Activated CD8-positive, alpha-beta memory T cell treated with anti-CD3 and anti-CD28 coated beads, Interleukin-2, amount 10 ng/mL, durations not matched to agents 7 days and 5 days (primary cell): ENCODE measurements at regions of chr1 and their contacts with region 1.

Region 1: DNA sequence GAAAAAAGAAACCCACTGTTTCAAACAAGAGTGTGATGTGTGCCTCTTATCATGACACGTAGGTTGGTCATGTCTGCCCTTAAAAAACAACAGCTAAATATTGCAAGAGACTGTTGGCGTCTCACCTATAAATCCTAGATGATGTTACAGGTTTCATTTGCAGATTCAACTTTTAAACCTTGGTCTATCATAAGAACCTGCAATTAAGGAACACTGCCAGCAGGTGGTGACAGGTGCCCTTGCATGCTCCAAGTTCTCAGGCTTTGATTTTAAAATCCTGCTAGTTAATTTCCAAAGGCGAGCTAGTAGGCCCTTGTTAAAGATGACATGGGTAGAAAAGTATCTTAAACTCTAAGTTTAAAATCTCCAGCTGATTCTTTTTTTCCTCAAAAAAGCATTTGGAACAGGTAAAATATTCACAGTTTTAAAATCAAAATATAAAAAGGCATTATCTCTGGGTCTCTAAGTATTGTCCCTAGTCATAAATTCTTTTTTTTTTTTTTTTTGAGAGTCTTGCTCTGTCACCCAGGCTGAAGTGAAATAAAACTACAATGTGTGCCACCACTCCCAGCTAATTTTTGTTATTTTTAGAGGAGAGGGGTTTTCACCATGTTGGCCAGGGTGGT is 39.1 kb downstream of the CLSTN1 start:
- DNase-seq: peak; percentile 81
- ATAC-seq: peak; percentile 27
- H3K4me3 Mint-ChIP-seq: no peak overlapping the region
- H3K27ac Mint-ChIP-seq: peak overlapping the region; percentile 54
- H3K4me1 Mint-ChIP-seq: peaks cover 47% of the 10 kb centered on the region
- H3K27me3 Mint-ChIP-seq: no peaks in the 10 kb centered on the region

Region 2: GRCh38 chr1:9798236-9799130 is 13.9 kb after region 1 on chr1:
- CTCF ChIA-PET with region 1: interaction called, 48 read pairs
- DNase-seq: no peak
- ATAC-seq: no peak
- H3K4me3 Mint-ChIP-seq: no peak overlapping the region
- H3K27ac Mint-ChIP-seq: peak overlapping the region; percentile 97
- H3K4me1 Mint-ChIP-seq: peaks cover 51% of the 10 kb centered on the region
- H3K27me3 Mint-ChIP-seq: no peaks in the 10 kb centered on the region

Region 3: GRCh38 chr1:9823943-9824701 is 39.5 kb after region 1 on chr1 and contains the start of gene CLSTN1:
- CTCF ChIA-PET with region 1: interaction called, 25 read pairs
- DNase-seq: peak; percentile 95
- ATAC-seq: peak; percentile 86
- H3K4me3 Mint-ChIP-seq: peak within 1 kb of the TSS; percentile 95
- H3K27ac Mint-ChIP-seq: peak within 1 kb of the TSS; percentile 83
- H3K4me1 Mint-ChIP-seq: peaks cover 50% of the 10 kb centered on the region
- H3K27me3 Mint-ChIP-seq: peaks cover 4% of the 10 kb centered on the region
- total RNA-seq, gene CLSTN1: 81.5 to 99.3 TPM

Region 4: GRCh38 chr1:9867408-9868243 is 83.0 kb after region 1 on chr1:
- CTCF ChIA-PET with region 1: interaction called, 229 read pairs
- DNase-seq: peak; percentile 92
- ATAC-seq: peak; percentile 98
- H3K4me3 Mint-ChIP-seq: no peak overlapping the region
- H3K27ac Mint-ChIP-seq: peak overlapping the region; percentile 7
- H3K4me1 Mint-ChIP-seq: peaks cover 2% of the 10 kb centered on the region
- H3K27me3 Mint-ChIP-seq: no peaks in the 10 kb centered on the region

Region 5: GRCh38 chr1:9881838-9882249 is 97.2 kb after region 1 on chr1:
- CTCF ChIA-PET with region 1: interaction called, 11 read pairs
- DNase-seq: no peak
- ATAC-seq: peak; percentile 65
- H3K4me3 Mint-ChIP-seq: peak overlapping the region; percentile 9
- H3K27ac Mint-ChIP-seq: peak overlapping the region; percentile 87
- H3K4me1 Mint-ChIP-seq: peaks cover 26% of the 10 kb centered on the region
- H3K27me3 Mint-ChIP-seq: no peaks in the 10 kb centered on the region